ENCODE measurements at regions of chr11 and their contacts with region 1.

Region 1: DNA sequence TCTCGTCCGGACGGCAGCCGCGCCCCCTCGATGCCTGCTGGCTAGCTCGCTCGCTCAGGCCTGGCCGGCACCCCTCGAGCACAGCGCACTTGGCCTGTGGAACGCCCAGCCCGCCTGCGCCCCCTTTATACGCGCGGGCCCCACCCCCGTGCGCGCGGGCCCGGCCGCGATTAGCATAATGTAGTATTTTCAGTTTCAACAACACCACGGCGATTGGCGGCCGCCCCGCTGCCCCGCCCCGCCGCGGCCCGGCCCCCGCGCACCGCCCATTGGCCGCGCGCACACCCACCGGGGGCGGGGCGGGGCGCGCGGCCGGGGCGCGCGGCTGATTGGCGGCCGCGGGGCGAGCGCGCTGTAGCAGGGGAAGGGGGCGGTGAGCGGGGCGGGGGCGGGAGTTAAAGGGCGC is at the start of gene CDKN1C:
- DNase-seq: peak; percentile 77
- ATAC-seq: peak; percentile 90
- H3K4me3 Mint-ChIP-seq: peak within 1 kb of the TSS; percentile 90
- H3K27ac Mint-ChIP-seq: no peak within 1 kb of the TSS
- H3K4me1 Mint-ChIP-seq: peaks cover 9% of the 10 kb centered on the region
- H3K27me3 Mint-ChIP-seq: peaks cover 9% of the 10 kb centered on the region
- CTCF ChIP-seq: no peak
- total RNA-seq, gene CDKN1C: 1.1 and 1.4 TPM in 2 replicates

Region 2: GRCh38 chr11:2428322-2428795 is 457.3 kb before region 1 on chr11:
- CTCF ChIA-PET with region 1: interaction called, 12 read pairs
- POLR2A ChIA-PET with region 1: no interaction called
- intact Hi-C with region 1: loop called (anchors 1 kb)
- DNase-seq: peak; percentile 76
- ATAC-seq: peak; percentile 97
- H3K4me3 Mint-ChIP-seq: no peak overlapping the region
- H3K27ac Mint-ChIP-seq: no peak overlapping the region
- H3K4me1 Mint-ChIP-seq: no peaks in the 10 kb centered on the region
- H3K27me3 Mint-ChIP-seq: no peaks in the 10 kb centered on the region
- CTCF ChIP-seq: peak; percentile 57

Region 3: GRCh38 chr11:2699531-2700414 is 185.9 kb before region 1 on chr11 and contains the start of gene KCNQ1OT1:
- CTCF ChIA-PET with region 1: no interaction called
- POLR2A ChIA-PET with region 1: no interaction called
- intact Hi-C with region 1: loop called (anchors 1 kb)
- DNase-seq: peak; percentile 77
- ATAC-seq: peak; percentile 94
- H3K4me3 Mint-ChIP-seq: peak within 1 kb of the TSS; percentile 85
- H3K27ac Mint-ChIP-seq: peak within 1 kb of the TSS; percentile 70
- H3K4me1 Mint-ChIP-seq: peaks cover 47% of the 10 kb centered on the region
- H3K27me3 Mint-ChIP-seq: no peaks in the 10 kb centered on the region
- CTCF ChIP-seq: no peak
- total RNA-seq, gene KCNQ1OT1: 0.88 and 1.2 TPM in 2 replicates

Region 4: DNA sequence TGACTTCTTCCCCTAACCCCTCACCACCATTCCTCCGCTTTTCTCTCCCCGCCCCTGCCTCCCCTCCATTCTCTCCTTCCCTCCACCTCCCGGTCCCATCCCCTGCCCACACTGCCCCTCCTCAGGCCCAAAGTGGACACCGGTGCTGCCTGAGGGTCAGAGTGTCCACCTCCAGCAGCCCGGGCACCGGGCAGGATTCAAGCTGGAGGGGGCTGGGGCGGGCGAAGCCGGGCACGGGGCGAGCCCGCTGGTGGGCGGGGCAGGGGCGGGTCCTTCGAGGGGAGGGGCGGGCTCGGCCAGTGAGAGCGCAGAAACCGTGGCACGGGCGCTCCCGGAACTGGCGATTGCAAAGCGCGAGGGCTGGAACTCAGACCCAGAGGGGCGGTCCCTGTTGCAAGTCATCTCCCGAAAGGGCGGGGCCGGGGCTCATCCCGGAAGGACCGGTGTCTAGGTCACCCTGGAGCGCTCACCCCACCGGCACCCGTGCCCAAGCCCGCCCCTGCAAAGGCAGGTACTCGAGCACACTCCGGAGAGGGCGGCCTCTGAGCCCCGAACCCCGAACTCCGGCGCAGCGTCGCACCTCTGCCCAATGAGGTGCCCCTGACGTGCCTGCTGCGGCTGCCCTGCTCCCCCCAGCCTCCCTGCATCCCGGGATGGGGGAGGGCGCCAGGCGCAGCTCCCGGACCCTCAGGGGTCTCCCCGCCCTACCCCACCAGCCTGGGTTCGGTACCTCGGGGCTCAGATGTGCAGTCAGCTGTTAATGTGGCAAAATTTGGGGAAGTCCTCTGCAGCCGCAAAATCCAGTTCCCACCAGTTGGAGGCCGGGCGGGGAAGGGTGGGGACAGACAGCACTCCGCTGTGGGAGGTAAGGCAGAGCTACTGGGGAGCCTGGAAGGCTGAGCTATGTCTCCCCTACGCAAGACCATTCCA is 16.4 kb after region 1 on chr11:
- CTCF ChIA-PET with region 1: interaction called, 11 read pairs
- POLR2A ChIA-PET with region 1: interaction called, 11 read pairs
- intact Hi-C with region 1: loop called (anchors 1 kb)
- DNase-seq: peak; percentile 80
- ATAC-seq: peak; percentile 97
- H3K4me3 Mint-ChIP-seq: peak overlapping the region; percentile 80
- H3K27ac Mint-ChIP-seq: peak overlapping the region; percentile 24
- H3K4me1 Mint-ChIP-seq: peaks cover 28% of the 10 kb centered on the region
- H3K27me3 Mint-ChIP-seq: no peaks in the 10 kb centered on the region
- CTCF ChIP-seq: no peak

Region 5: GRCh38 chr11:3091791-3092602 is 206.3 kb after region 1 on chr11:
- CTCF ChIA-PET with region 1: interaction called, 16 read pairs
- POLR2A ChIA-PET with region 1: interaction called, 3 read pairs
- intact Hi-C with region 1: loop called (anchors 1 kb)
- DNase-seq: peak; percentile 73
- ATAC-seq: peak; percentile 89
- H3K4me3 Mint-ChIP-seq: no peak overlapping the region
- H3K27ac Mint-ChIP-seq: no peak overlapping the region
- H3K4me1 Mint-ChIP-seq: peaks cover 2% of the 10 kb centered on the region
- H3K27me3 Mint-ChIP-seq: peaks cover 3% of the 10 kb centered on the region
- CTCF ChIP-seq: peak; percentile 87

Region 6: GRCh38 chr11:4167758-4168157 is 1282.1 kb after region 1 on chr11:
- CTCF ChIA-PET with region 1: no interaction called
- POLR2A ChIA-PET with region 1: no interaction called
- intact Hi-C with region 1: no loop called
- DNase-seq: no peak
- ATAC-seq: no peak
- H3K4me3 Mint-ChIP-seq: no peak overlapping the region
- H3K27ac Mint-ChIP-seq: no peak overlapping the region
- H3K4me1 Mint-ChIP-seq: no peaks in the 10 kb centered on the region
- H3K27me3 Mint-ChIP-seq: no peaks in the 10 kb centered on the region
- CTCF ChIP-seq: no peak